ENCODE measurements at regions of chr14 and their contacts with region 1.

Region 1: DNA sequence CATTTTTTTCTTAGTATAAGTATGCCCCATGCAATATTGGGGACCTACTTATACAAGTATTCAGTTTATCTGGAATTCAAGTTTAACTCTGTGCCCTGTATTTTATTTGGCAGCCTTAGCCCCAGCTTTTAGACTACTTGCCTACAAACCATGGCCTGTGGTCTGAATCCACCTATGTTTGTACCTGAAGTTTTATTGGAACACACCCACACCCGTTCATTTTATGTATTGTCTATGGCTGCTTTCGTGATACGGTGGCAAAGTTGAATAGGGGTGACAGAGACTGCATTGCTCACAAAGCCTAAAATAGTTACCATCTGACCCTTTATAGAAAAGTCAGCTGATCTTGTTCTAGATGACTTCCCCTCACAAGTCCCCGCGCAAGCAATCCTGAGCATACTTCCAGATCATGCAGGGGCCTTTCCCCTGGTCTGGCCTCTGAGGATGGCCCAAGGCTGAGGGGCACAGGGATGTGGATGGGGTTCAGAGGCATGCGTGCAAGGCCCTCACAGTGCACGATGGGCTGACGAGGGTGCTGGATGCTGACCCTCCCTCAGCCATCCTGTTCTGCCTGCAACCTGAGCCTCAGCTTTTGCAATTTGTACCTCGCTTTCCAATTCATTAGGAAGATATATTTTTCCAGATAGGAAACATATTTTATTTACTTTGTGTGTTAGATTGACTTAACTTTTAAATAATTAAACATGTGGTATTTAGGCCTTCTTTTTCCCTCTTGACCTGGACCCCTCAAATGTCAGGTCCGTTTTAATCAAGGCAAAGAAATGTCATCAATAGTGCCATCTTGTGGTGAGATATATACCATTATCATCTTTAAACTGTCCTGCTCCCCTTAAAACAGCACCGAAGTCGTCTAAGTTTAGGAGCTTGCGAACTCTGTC is 527.3 kb upstream of the CCDC196 start:
- DNase-seq: peak in 2 of 9 experiments; percentile 55 to 69
- ATAC-seq: peak; percentile 57
- H3K4me3 ChIP-seq: no peak overlapping the region
- H3K4me3 Mint-ChIP-seq: no peak overlapping the region
- H3K27ac ChIP-seq: no peak overlapping the region
- H3K27ac Mint-ChIP-seq: no peak overlapping the region
- H3K4me1 ChIP-seq: peaks cover 19% of the 10 kb centered on the region
- H3K4me1 Mint-ChIP-seq: peaks cover 26% of the 10 kb centered on the region
- H3K27me3 ChIP-seq: no peaks in the 10 kb centered on the region
- H3K27me3 Mint-ChIP-seq: no peaks in the 10 kb centered on the region
- CTCF ChIP-seq: peak; percentile 83

Region 2: DNA sequence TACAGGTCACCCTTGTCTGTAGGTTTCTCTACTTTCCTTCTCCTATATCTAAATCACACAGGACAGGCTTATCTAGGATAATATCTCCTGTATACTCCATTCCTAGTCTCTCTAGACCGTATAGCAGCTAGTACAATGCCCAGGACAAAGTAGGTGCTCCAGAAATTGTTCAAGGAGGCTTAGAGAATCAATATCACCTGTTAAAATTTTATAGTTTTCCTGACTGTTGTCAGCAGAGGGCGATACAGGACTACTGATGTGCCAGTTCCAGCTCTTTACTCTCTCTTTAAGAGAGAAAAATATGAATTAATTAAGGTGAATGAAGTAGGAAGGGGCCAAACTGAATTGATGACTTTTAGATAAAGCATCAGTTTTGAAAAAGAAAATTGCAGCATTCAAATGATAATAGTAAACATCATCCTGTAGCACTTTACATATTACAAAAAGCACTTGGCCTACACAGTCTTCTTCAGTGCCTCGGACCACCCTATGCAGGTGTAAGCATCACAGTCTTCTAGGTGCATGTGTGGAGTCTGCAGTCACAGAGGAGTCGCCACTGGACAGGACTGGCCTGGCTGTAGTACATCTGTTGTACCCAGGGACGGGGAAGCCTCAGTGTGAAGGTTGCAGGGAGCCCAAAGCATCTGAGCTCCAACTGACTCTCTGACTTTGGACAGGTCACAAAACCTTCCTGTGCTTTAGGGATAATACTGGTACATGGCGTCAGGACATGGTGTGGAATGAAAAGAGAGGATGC is 794.7 kb before region 1 on chr14:
- CTCF ChIA-PET with region 1: interaction called, 20 read pairs
- POLR2A ChIA-PET with region 1: no interaction called
- intact Hi-C with region 1: loop called (anchors 1 kb)
- DNase-seq: peak in 6 of 9 experiments; percentile 5 to 69 (median 37)
- ATAC-seq: peak; percentile 48
- H3K4me3 ChIP-seq: no peak overlapping the region
- H3K4me3 Mint-ChIP-seq: no peak overlapping the region
- H3K27ac ChIP-seq: no peak overlapping the region
- H3K27ac Mint-ChIP-seq: no peak overlapping the region
- H3K4me1 ChIP-seq: no peaks in the 10 kb centered on the region
- H3K4me1 Mint-ChIP-seq: no peaks in the 10 kb centered on the region
- H3K27me3 ChIP-seq: no peaks in the 10 kb centered on the region
- H3K27me3 Mint-ChIP-seq: no peaks in the 10 kb centered on the region
- CTCF ChIP-seq: peak; percentile 76

Region 3: DNA sequence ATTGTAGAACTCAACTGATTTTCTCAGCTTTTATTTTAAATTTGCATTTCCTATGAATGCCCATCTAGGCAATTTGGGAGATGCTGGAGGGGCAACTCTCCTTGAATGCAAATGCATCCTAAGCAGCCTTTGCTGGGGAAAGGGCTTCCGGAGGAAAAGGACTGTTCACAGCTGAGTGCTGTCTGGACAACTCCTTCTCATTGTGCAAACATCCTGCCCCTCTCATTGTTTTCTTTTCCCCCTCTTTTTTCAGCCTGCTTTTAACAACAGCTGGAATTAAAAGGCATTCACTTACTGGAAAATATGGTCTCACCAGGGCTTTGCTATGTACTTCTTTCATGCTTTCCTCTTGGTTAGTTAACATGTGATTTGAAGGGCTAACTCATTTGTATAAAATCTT is 148.6 kb before region 1 on chr14:
- CTCF ChIA-PET with region 1: interaction called, 73 read pairs
- POLR2A ChIA-PET with region 1: no interaction called
- intact Hi-C with region 1: loop called in 1 of 2 experiments (anchors 1 kb)
- DNase-seq: no peak
- ATAC-seq: no peak
- H3K4me3 ChIP-seq: no peak overlapping the region
- H3K4me3 Mint-ChIP-seq: no peak overlapping the region
- H3K27ac ChIP-seq: no peak overlapping the region
- H3K27ac Mint-ChIP-seq: no peak overlapping the region
- H3K4me1 ChIP-seq: peaks cover 3% of the 10 kb centered on the region
- H3K4me1 Mint-ChIP-seq: peaks cover 3% of the 10 kb centered on the region
- H3K27me3 ChIP-seq: no peaks in the 10 kb centered on the region
- H3K27me3 Mint-ChIP-seq: no peaks in the 10 kb centered on the region
- CTCF ChIP-seq: no peak

Region 4: DNA sequence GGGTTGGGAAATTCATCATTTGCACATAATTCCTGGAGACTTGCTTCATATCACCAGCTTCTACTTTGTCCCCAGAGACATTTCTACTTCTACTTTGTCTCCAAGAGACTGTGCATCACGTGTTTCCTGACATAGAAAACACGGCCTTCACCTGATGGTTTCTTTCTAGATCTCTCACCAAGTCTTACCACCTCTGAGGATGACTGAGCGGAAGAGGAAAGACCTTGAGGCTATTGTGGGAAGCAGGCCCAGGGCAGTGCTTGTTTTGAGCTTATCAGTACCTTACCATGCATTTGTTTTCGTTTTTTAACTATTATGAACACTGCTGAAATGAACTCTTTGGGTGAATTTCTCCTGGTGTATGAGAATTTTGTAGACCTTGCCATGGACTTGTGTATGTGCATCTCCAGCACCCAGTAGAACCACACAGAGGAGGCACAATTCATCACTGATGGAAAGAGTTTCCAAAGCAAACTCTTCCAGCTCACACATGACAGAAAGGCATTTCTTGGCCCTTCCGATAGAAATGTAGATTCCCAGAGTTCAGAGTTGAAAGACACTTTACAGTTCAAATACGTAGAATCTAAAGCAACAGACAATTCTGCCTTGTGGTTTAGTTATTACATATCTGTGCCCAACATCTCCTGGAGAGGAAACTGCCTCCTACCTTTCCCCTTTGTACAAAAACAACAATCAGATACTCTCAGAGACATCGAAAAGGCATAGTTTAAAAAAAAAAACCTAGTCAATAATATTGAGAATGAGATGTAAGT is 111.7 kb before region 1 on chr14:
- CTCF ChIA-PET with region 1: interaction called, 55 read pairs
- POLR2A ChIA-PET with region 1: interaction called, 20 read pairs
- intact Hi-C with region 1: loop called in 1 of 2 experiments (anchors 1 kb)
- DNase-seq: peak; percentile 41 to 93 (median 70)
- ATAC-seq: peak; percentile 87
- H3K4me3 ChIP-seq: peak overlapping the region; percentile 13 to 21
- H3K4me3 Mint-ChIP-seq: peak overlapping the region; percentile 71
- H3K27ac ChIP-seq: peak overlapping the region; percentile 57 to 84
- H3K27ac Mint-ChIP-seq: peak overlapping the region; percentile 92
- H3K4me1 ChIP-seq: peaks cover 90% of the 10 kb centered on the region
- H3K4me1 Mint-ChIP-seq: peaks cover 85% of the 10 kb centered on the region
- H3K27me3 ChIP-seq: no peaks in the 10 kb centered on the region
- H3K27me3 Mint-ChIP-seq: no peaks in the 10 kb centered on the region
- CTCF ChIP-seq: no peak

Region 5: DNA sequence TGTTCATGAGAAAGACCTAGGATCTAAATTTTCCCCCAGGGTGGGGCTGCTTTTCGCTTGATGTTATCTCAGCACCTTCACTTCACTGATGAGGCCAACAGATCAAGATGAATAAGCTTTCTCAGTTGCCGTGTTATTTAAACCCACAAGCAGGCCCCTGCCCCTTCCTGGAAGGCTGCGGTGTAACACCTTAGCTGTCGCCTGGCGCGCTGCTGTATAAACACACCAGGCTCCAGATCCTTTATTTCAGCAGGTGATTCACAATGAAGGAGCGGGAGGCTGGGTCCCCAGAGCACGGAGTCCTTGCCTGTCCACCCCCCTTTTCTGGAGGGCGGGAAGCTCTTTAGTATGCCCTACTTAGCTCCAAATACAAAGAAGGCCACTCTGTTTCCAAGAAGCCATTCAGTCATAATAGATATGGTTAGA is 31.0 kb before region 1 on chr14:
- CTCF ChIA-PET with region 1: interaction called, 87 read pairs
- POLR2A ChIA-PET with region 1: interaction called, 3 read pairs
- intact Hi-C with region 1: no loop called
- DNase-seq: peak; percentile 41 to 84 (median 77)
- ATAC-seq: peak; percentile 89
- H3K4me3 ChIP-seq: no peak overlapping the region
- H3K4me3 Mint-ChIP-seq: peak overlapping the region; percentile 56
- H3K27ac ChIP-seq: peak overlapping the region; percentile 43 to 68
- H3K27ac Mint-ChIP-seq: peak overlapping the region; percentile 87
- H3K4me1 ChIP-seq: peaks cover 45% of the 10 kb centered on the region
- H3K4me1 Mint-ChIP-seq: peaks cover 55% of the 10 kb centered on the region
- H3K27me3 ChIP-seq: no peaks in the 10 kb centered on the region
- H3K27me3 Mint-ChIP-seq: no peaks in the 10 kb centered on the region
- CTCF ChIP-seq: no peak

Region 6: GRCh38 chr14:66070509-66071319 is 111.8 kb after region 1 on chr14:
- CTCF ChIA-PET with region 1: interaction called, 8 read pairs
- POLR2A ChIA-PET with region 1: no interaction called
- intact Hi-C with region 1: loop called (anchors 2 to 5 kb)
- DNase-seq: peak; percentile 47 to 86 (median 73)
- ATAC-seq: peak; percentile 89
- H3K4me3 ChIP-seq: no peak overlapping the region
- H3K4me3 Mint-ChIP-seq: no peak overlapping the region
- H3K27ac ChIP-seq: no peak overlapping the region
- H3K27ac Mint-ChIP-seq: no peak overlapping the region
- H3K4me1 ChIP-seq: no peaks in the 10 kb centered on the region
- H3K4me1 Mint-ChIP-seq: peaks cover 2% of the 10 kb centered on the region
- H3K27me3 ChIP-seq: no peaks in the 10 kb centered on the region
- H3K27me3 Mint-ChIP-seq: no peaks in the 10 kb centered on the region
- CTCF ChIP-seq: peak; percentile 99

Region 7: GRCh38 chr14:66476964-66477363 is 518.1 kb after region 1 on chr14:
- CTCF ChIA-PET with region 1: no interaction called
- POLR2A ChIA-PET with region 1: no interaction called
- intact Hi-C with region 1: no loop called
- DNase-seq: no peak
- ATAC-seq: no peak
- H3K4me3 ChIP-seq: no peak overlapping the region
- H3K4me3 Mint-ChIP-seq: no peak overlapping the region
- H3K27ac ChIP-seq: no peak overlapping the region
- H3K27ac Mint-ChIP-seq: no peak overlapping the region
- H3K4me1 ChIP-seq: no peaks in the 10 kb centered on the region
- H3K4me1 Mint-ChIP-seq: no peaks in the 10 kb centered on the region
- H3K27me3 ChIP-seq: no peaks in the 10 kb centered on the region
- H3K27me3 Mint-ChIP-seq: no peaks in the 10 kb centered on the region
- CTCF ChIP-seq: no peak

Measured in CD8-positive, alpha-beta T cell (primary cell).